ENCODE measurements at regions of chr22 and their contacts with region 1.

Region 1: DNA sequence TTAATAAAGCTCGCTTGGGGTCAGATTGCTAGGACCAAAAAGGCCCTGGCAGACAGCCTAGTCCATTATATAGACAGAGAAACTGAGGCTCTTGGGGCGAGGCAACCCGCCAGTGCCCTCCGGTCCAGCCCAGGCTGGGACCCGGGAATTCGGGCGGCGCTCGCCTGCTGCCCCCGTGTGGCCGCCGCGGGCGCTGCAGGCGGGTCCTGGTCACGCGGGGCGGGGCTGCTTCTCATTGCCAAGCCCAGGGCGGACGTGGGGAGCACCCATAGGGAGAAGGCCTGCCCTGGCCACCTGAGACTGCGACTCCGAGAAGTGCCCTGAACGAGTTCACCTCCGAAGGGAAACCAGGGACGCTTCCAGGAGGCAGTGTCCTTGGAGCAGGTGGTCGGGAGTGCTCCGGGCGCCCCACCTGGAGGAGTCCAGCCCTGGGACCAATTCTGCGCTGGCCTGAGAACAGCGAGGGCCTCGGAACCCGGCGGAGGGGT is 36.0 kb upstream of the CSNK1E start:
- DNase-seq: peak; percentile 38 to 81 (median 64)
- ATAC-seq: peak; percentile 94
- H3K4me3 ChIP-seq: no peak overlapping the region
- H3K4me3 Mint-ChIP-seq: no peak overlapping the region
- H3K27ac ChIP-seq: no peak overlapping the region
- H3K27ac Mint-ChIP-seq: no peak overlapping the region
- H3K4me1 ChIP-seq: peaks cover 7% of the 10 kb centered on the region
- H3K4me1 Mint-ChIP-seq: no peaks in the 10 kb centered on the region
- H3K27me3 ChIP-seq: no peaks in the 10 kb centered on the region
- H3K27me3 Mint-ChIP-seq: no peaks in the 10 kb centered on the region
- CTCF ChIP-seq: peak; percentile 99

Region 2: DNA sequence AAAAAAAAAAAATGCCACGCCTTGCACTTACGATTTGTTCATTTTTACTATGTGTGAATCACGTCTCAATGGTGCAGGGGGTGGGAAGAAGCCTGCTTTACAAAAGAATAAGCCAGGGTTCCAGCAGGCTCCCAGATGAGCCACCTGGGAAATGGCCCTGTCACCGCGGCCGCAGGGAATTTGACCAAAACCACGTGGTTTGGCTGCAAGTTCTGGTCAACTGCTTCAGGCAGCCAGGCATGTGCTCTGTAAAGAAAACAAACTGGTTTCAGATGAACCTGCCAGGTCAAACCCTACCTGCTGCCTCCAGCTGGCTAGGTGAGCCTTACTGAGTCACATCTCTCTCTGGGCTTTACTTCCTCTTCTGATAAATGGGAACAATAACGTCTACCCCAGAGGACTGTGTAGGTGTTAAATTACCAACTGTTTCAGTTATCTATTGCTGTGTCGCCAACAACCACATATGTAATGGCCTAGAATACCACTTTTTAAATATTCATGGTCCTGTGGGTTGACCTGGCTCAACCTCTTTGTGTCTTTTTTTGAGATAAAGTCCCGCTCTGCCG is 576.0 kb before region 1 on chr22:
- CTCF ChIA-PET with region 1: no interaction called
- POLR2A ChIA-PET with region 1: no interaction called
- intact Hi-C with region 1: no loop called
- DNase-seq: no peak
- ATAC-seq: no peak
- H3K4me3 ChIP-seq: no peak overlapping the region
- H3K4me3 Mint-ChIP-seq: no peak overlapping the region
- H3K27ac ChIP-seq: no peak overlapping the region
- H3K27ac Mint-ChIP-seq: no peak overlapping the region
- H3K4me1 ChIP-seq: no peaks in the 10 kb centered on the region
- H3K4me1 Mint-ChIP-seq: no peaks in the 10 kb centered on the region
- H3K27me3 ChIP-seq: no peaks in the 10 kb centered on the region
- H3K27me3 Mint-ChIP-seq: no peaks in the 10 kb centered on the region
- CTCF ChIP-seq: no peak

Region 3: DNA sequence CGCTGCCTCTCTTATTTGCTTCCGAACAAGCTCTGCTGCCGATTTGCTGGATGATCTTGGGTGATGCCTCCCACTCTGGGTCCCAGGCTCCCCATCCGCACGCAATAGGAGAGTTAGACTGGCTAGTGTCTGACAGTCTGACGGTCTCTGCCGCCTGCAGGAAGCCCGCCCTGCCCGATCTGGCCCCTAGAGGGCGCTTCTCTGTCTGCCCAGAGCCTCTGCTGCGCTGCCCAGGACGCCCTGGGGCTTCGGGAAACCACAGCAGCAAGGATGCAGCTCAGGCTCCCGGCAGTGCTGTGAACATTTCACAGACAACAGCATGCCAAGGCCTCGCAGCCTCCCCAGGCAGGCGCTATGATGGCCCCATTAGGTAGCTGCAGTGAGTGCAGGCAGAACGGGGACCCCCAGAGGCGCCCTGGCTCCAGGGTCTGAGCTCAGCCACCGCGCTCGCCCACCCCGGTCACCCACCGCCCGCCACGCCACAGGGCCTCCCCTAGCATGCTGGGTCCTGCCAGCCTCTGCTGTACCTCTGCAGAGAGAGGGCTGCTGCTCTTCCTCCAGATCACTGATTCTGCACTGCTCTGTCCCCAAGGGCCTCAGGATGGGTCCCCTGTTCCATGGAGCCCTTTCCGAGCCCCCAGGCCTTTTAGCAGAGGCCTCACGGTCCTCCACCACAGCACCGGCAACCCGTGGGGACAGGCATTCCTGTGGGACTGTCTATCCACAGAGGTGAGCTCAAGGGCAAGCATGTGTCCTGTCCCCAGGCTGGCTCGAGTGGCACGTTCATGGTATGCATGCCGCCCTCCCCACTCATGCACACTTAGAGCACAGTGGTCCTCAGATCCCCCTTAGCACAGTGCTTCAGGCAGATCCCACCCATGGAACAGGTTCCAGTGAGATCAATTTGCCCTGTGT is 238.4 kb before region 1 on chr22:
- CTCF ChIA-PET with region 1: no interaction called
- POLR2A ChIA-PET with region 1: no interaction called
- intact Hi-C with region 1: loop called in 1 of 2 experiments (anchors 2 kb)
- DNase-seq: peak; percentile 50 to 83 (median 71)
- ATAC-seq: peak; percentile 95
- H3K4me3 ChIP-seq: no peak overlapping the region
- H3K4me3 Mint-ChIP-seq: no peak overlapping the region
- H3K27ac ChIP-seq: no peak overlapping the region
- H3K27ac Mint-ChIP-seq: no peak overlapping the region
- H3K4me1 ChIP-seq: peaks cover 8% of the 10 kb centered on the region
- H3K4me1 Mint-ChIP-seq: peaks cover 4% of the 10 kb centered on the region
- H3K27me3 ChIP-seq: no peaks in the 10 kb centered on the region
- H3K27me3 Mint-ChIP-seq: no peaks in the 10 kb centered on the region
- CTCF ChIP-seq: peak; percentile 90

Region 4: GRCh38 chr22:38262051-38262795 is 91.0 kb before region 1 on chr22:
- CTCF ChIA-PET with region 1: no interaction called
- POLR2A ChIA-PET with region 1: no interaction called
- intact Hi-C with region 1: loop called in 1 of 2 experiments (anchors 2 kb)
- DNase-seq: peak; percentile 17 to 65 (median 33)
- ATAC-seq: no peak
- H3K4me3 ChIP-seq: no peak overlapping the region
- H3K4me3 Mint-ChIP-seq: no peak overlapping the region
- H3K27ac ChIP-seq: no peak overlapping the region
- H3K27ac Mint-ChIP-seq: peak overlapping the region; percentile 51
- H3K4me1 ChIP-seq: peaks cover 58% of the 10 kb centered on the region
- H3K4me1 Mint-ChIP-seq: peaks cover 61% of the 10 kb centered on the region
- H3K27me3 ChIP-seq: no peaks in the 10 kb centered on the region
- H3K27me3 Mint-ChIP-seq: no peaks in the 10 kb centered on the region
- CTCF ChIP-seq: peak; percentile 48

Region 5: DNA sequence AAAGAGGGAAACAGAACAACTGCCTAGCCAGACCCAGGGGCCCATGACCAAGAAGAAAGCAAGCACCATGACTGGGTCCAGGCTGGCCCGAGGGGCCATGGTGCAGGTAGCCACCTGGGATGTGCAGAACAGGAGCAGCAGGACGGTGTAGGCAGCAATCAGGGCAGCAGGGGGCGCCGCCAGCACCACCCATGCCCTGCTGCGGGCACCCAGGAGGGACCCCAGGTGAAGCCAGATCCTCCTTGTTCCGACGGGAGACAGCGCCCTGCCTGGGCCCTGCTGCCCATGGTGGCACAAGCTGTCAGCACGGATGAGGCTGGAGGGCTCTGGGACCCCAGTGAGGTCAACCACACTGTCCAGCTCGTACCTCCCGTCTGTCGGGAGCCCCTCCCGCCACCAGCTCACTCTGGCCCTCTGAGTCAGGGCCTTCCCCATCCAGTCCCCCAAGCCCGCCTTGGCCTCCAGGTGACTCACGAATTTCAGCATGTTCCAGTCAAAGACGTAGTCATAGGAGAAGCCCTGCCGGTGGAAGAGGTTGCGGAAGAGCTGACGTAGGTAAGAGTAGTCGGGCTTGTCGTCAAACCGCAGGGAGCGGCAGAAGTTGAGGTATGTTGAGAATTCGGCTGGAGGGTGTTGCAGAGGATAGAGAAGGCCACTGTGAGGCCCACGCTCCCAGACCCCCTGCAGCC is 54.7 kb before region 1 on chr22:
- CTCF ChIA-PET with region 1: no interaction called
- POLR2A ChIA-PET with region 1: no interaction called
- intact Hi-C with region 1: loop called (anchors 1 kb)
- DNase-seq: peak in 12 of 14 experiments; percentile 25 to 68 (median 42)
- ATAC-seq: peak; percentile 80
- H3K4me3 ChIP-seq: no peak overlapping the region
- H3K4me3 Mint-ChIP-seq: no peak overlapping the region
- H3K27ac ChIP-seq: no peak overlapping the region
- H3K27ac Mint-ChIP-seq: no peak overlapping the region
- H3K4me1 ChIP-seq: no peaks in the 10 kb centered on the region
- H3K4me1 Mint-ChIP-seq: no peaks in the 10 kb centered on the region
- H3K27me3 ChIP-seq: no peaks in the 10 kb centered on the region
- H3K27me3 Mint-ChIP-seq: no peaks in the 10 kb centered on the region
- CTCF ChIP-seq: peak; percentile 57

Region 6: DNA sequence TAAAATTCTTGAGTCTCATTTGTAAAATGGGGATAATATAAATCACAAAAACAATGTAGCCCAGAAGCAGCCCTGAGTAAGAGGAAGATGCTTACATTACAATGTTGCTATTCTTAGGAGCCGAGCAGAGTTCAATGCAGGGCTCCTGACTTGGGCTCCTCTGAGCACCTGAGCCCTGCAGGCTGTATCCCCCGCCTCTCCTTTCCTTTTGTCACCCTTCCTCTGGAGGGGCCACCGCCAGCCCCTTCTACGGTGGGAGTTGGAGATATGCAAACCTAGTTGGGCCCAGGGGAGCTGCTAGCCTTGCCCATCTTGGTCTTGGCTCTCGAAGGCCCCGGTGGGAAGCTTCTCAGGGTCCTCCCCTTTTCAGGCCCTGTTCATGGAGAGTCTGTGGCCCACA is 27.6 kb before region 1 on chr22:
- CTCF ChIA-PET with region 1: no interaction called
- POLR2A ChIA-PET with region 1: no interaction called
- intact Hi-C with region 1: no loop called
- DNase-seq: no peak
- ATAC-seq: no peak
- H3K4me3 ChIP-seq: no peak overlapping the region
- H3K4me3 Mint-ChIP-seq: no peak overlapping the region
- H3K27ac ChIP-seq: no peak overlapping the region
- H3K27ac Mint-ChIP-seq: no peak overlapping the region
- H3K4me1 ChIP-seq: peaks cover 5% of the 10 kb centered on the region
- H3K4me1 Mint-ChIP-seq: no peaks in the 10 kb centered on the region
- H3K27me3 ChIP-seq: no peaks in the 10 kb centered on the region
- H3K27me3 Mint-ChIP-seq: no peaks in the 10 kb centered on the region
- CTCF ChIP-seq: no peak

Region 7: DNA sequence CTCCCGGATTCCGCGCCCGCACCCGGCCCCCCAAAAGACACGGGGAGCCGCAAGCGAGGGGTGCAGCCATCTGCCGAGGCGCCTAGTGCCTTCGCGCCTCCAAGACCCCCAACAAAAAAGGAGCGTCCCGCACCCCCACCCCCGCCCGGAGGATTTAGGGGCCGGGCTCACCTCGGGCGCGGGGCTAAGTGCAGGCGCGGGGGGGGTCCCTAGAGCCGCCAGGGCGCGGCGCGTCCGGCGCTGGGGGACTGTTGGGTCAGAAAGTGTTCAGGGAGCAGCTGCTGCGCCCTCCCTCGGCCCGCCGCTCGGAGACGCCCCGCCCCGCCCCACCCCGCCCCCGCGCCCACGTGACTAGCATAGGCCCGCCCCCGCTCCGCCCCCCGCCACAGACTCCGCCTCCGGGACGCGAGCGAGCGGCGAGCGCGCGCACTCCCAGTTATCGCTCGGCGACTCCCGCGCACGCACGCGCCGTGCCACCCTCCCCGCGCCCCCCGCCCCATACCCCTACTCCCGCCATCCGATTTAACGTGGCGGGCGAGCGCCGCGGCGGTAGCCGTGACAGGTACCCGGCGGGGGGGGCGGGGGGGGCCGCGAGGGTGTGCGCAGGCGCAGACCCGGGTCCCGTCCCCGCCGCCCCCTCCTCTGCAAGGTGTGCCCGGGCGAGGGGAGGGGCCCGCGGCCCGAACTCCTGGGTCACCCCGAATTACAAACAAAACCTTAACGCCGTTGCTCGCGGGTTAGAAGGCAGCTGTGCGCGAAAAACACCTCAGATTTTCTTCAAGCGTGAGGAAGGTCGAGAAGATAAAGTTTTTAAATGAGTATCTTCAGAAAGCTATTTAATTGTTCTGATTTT is 45.6 kb after region 1 on chr22:
- CTCF ChIA-PET with region 1: no interaction called
- POLR2A ChIA-PET with region 1: no interaction called
- intact Hi-C with region 1: loop called in 1 of 2 experiments (anchors 2 kb)
- DNase-seq: peak; percentile 72 to 91 (median 86)
- ATAC-seq: peak; percentile 73
- H3K4me3 ChIP-seq: peak overlapping the region; percentile 68
- H3K4me3 Mint-ChIP-seq: peak overlapping the region; percentile 86
- H3K27ac ChIP-seq: no peak overlapping the region
- H3K27ac Mint-ChIP-seq: peak overlapping the region; percentile 75
- H3K4me1 ChIP-seq: peaks cover 15% of the 10 kb centered on the region
- H3K4me1 Mint-ChIP-seq: peaks cover 35% of the 10 kb centered on the region
- H3K27me3 ChIP-seq: no peaks in the 10 kb centered on the region
- H3K27me3 Mint-ChIP-seq: no peaks in the 10 kb centered on the region
- CTCF ChIP-seq: no peak

Region 8: DNA sequence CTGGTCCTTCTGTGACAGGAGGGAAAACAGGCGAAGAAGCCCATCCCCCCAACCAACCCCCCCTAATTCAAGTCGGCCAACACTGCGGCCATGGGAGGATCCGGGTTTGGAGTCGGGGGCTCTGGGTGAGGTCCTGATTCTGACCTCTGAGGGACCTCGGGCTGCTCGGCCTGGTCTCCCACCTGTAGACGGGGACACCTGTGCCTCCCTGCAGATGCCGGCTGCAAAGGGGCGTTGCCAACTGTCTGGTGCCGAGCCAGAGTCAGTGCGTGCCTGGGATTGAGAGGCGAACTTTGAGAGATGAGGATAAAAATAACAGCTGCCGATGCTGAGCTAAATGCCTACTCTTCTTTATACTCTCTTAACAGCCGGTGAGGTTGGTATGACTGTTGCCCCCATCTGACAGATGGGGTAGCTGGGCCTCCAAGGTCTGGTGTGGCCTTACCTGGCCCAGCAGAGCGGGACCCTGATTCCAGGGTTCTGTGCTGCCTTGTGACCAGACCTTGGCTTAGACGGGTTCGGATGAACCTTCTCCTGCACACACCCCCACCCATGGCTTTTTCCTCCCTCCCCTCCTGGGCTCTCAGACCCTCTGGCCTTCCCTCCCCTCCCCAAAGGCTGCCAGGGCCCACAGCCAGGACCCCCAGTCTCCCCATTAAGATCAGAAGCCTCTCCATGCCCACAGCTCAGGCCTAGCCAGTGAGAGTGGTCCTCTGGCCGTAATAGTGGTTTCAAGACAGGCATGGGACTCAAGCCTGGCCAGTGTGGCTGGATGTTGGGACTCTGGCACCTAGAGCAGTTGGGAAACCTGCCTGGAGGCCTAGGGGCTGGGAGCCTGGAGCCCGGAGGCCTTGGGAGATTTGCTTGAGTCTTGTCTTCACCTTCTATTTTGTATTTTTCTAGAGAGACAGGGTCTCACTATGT is 60.2 kb after region 1 on chr22:
- CTCF ChIA-PET with region 1: no interaction called
- POLR2A ChIA-PET with region 1: no interaction called
- intact Hi-C with region 1: no loop called
- DNase-seq: peak in 2 of 14 experiments; percentile 18 to 27
- ATAC-seq: no peak
- H3K4me3 ChIP-seq: no peak overlapping the region
- H3K4me3 Mint-ChIP-seq: no peak overlapping the region
- H3K27ac ChIP-seq: no peak overlapping the region
- H3K27ac Mint-ChIP-seq: no peak overlapping the region
- H3K4me1 ChIP-seq: peaks cover 10% of the 10 kb centered on the region
- H3K4me1 Mint-ChIP-seq: no peaks in the 10 kb centered on the region
- H3K27me3 ChIP-seq: no peaks in the 10 kb centered on the region
- H3K27me3 Mint-ChIP-seq: peaks cover 6% of the 10 kb centered on the region
- CTCF ChIP-seq: no peak

Measured in CD4-positive, alpha-beta T cell (primary cell).